Cardiac septum (tissue), 1 donor: ENCODE measurements at regions of chr5 and their contacts with region 1.

Region 1: DNA sequence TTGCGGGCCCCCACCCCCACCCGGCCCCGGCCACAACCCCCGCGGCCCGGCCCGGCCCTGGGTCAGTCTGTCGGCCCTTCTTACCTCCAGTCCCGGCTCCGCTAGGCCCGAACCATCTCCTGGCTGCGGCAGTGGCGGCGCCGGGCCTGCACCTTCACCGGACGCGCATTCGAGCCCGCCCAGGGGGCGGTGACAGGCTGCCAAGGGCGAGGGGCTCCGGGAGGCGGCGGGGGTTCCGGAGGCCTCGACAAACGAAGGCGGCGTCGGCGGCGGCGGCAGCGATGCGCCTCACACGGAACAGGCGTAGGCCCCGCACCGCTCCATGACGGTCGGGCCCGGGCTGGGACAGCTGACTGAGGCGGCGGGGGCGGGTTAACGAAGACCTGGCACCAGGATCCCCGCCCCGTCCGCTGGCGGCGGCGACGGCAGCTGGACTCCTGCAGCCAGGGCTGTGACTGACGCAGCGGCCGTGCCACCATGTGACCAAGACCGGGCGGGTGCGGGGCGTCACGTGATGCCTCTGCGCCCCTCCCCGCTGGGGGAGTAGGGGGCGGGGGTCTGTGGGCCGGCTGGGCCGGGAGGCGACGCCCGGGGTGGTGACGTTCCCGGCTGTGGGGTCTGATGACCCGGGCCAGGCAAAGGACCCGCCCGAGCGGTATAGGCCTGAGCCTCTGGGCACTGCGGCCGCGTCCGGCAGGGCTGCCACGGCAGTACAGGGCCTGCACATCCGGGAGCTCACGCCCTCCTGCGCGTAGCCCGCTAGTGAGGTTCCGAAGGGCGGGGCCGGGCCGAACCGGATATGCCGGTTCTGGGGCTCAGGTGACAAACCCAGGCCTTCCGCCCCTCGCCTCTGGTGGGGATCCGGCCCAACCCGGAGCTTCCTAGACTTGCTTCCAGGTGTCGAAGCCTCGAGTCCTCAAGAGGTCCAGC is at the start of gene AFF4:
- DNase-seq: peak; percentile 99
- total RNA-seq, gene AFF4: 59.1 TPM

Region 2: DNA sequence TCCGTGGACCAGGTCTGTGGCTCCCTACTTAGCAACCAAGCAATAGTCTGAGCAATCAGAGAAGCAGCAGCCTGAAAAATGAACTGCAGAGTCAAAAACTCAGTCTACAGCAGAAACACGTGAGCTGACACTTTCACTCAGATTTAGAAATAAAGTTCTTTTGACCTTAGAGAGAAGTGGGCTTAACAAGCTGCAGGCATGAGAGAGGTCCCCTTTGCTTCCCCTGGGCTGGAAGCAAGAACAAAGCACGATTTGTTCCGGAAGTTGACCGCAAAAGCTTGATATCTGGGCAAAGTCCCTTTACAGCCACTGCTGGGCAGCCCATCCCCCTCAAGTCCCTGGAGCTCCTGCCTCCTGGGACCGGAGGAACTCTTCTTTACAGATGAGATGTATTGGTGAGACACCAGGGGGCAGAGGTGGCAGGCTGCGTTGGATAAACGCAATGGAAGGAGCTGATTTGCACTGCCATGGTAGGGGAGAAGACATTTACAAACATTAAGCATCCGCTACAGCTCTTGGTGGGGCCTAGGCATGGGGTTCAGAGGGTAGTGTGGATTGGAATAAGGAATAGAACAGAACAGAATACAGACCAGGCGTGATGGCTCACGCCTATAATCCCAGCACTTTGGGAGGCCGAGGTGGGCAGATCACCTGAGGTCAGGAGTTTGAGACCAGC is 156.1 kb before region 1 on chr5:
- intact Hi-C with region 1: no loop called
- DNase-seq: no peak

Region 3: DNA sequence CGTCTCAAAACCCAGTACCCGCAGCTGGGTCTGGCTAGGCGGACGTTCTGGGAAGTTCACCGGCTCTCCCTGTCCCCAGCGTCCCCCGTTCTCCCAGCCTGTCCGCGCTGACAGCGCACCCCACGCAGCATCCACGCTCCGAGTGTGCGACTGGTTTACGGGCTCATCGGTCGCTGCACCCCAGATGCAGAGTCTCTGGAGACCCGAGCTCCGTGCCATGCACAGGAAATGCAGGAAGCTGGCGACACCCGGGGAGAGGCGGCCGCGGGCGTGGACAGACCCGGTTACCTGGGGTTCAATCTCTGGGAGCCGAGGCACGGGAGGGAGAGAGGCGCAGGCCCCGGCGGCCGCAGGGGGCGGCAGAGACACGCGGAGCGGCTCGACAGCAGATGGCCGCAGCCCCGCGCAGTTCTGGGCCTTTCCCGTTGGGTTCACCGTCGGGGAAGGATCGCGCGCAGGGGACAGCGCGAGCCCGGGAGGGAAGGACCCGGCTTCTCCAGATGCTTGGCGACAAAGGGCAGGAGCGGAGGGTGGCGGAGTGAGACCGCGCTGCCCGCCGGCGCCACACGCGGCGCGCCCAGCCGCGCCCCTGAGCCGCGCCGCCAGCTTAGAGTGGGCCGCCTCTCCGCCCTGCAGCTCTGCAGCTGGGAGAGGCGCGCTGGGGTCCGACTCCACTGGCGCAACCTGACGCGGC is 133.6 kb before region 1 on chr5:
- intact Hi-C with region 1: loop called (anchors 5 kb)
- DNase-seq: peak; percentile 89

Region 4: GRCh38 chr5:133025804-133026663 is 62.6 kb after region 1 on chr5 and contains the start of gene ZCCHC10:
- intact Hi-C with region 1: loop called (anchors 1 kb)
- DNase-seq: peak; percentile 97
- total RNA-seq, gene ZCCHC10: 19.9 TPM

Region 5: DNA sequence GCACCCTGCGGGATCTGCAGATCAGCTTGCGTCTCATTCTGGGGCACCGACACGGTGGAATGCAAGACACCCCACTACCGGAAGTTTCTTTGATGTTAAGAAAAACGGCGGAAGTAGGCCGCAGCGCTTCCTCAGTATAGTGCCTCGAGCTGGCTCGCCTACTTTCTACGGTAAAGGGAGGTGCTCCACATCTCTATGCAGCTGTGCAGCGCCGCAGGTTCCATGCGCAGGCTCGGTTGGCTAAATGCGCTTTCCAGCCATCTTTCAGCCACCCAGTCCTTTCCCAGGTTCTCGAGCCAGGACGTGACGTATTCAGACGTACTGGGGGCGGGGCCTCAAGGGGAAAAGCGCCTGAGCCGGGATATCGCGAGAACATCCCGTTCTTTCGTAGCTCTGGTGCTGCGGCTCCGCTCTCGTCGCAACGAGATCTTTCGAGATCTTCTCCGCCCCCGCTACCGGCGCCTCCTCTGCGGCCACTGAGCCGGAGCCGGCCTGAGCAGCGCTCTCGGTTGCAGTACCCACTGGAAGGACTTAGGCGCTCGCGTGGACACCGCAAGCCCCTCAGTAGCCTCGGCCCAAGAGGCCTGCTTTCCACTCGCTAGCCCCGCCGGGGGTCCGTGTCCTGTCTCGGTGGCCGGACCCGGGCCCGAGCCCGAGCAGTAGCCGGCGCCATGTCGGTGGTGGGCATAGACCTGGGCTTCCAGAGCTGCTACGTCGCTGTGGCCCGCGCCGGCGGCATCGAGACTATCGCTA is 88.3 kb after region 1 on chr5 and contains the start of gene HSPA4:
- intact Hi-C with region 1: loop called (anchors 1 kb)
- DNase-seq: peak; percentile 99
- total RNA-seq, gene HSPA4: 142 TPM

Region 6: GRCh38 chr5:133145436-133146170 is 182.2 kb after region 1 on chr5:
- intact Hi-C with region 1: no loop called
- DNase-seq: no peak

Region 7: GRCh38 chr5:133483406-133484090 is 520.1 kb after region 1 on chr5:
- intact Hi-C with region 1: no loop called
- DNase-seq: no peak